PC-3 (cell line): ENCODE measurements at regions of chr11 and their contacts with region 1.

Region 1: GRCh38 chr11:45339729-45340519 is 53.8 kb upstream of the SYT13 start:
- DNase-seq: peak; percentile 87
- ATAC-seq: peak; percentile 95
- H3K4me3 ChIP-seq: peak overlapping the region; percentile 26; the same call in 1 of the 2 replicates
- H3K27ac ChIP-seq: no peak overlapping the region
- H3K4me1 ChIP-seq: no peaks in the 10 kb centered on the region; the same call in 1 of the 2 replicates
- H3K27me3 ChIP-seq: peaks cover 35% of the 10 kb centered on the region
- CTCF ChIP-seq: peak; percentile 81

Region 2: DNA sequence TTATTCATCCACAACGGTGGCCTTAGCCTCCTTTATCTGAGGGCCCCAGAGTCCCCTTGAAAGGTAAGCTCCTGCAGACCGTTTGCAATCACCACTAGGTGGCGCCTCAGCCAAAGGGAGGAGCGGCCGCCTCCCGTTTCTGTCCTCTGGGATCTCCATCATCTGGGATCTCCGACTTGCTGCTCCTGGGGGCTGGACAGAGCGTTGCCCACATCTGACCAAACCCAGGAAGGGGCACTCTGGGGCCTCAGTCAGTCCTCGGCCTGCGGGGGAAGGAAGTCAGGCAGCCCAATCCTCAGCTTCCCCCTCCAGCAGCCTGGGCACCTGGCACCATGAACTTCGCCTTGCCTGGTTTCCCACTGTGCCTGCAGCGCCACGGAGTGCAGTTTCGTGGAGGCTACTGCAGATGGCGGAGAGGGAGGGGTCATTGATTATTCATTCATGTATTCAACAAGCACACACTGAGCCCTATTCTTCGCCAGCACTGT is 412.7 kb before region 1 on chr11:
- CTCF ChIA-PET with region 1: no interaction called
- POLR2A ChIA-PET with region 1: interaction called, 3 read pairs
- intact Hi-C with region 1: loop called (anchors 10 kb)
- DNase-seq: peak; percentile 79
- ATAC-seq: peak; percentile 89
- H3K4me3 ChIP-seq: no peak overlapping the region
- H3K27ac ChIP-seq: no peak overlapping the region
- H3K4me1 ChIP-seq: no peaks in the 10 kb centered on the region
- H3K27me3 ChIP-seq: no peaks in the 10 kb centered on the region
- CTCF ChIP-seq: peak; percentile 89

Region 3: GRCh38 chr11:45771566-45772448 is 431.9 kb after region 1 on chr11:
- CTCF ChIA-PET with region 1: interaction called, 6 read pairs
- POLR2A ChIA-PET with region 1: no interaction called
- intact Hi-C with region 1: loop called (anchors 10 kb)
- DNase-seq: peak; percentile 78
- ATAC-seq: peak; percentile 95
- H3K4me3 ChIP-seq: peak overlapping the region; percentile 76
- H3K27ac ChIP-seq: no peak overlapping the region
- H3K4me1 ChIP-seq: no peaks in the 10 kb centered on the region
- H3K27me3 ChIP-seq: peaks cover 15% of the 10 kb centered on the region
- CTCF ChIP-seq: peak; percentile 78